ENCODE measurements at regions of chr16 and their contacts with region 1.

Region 1: DNA sequence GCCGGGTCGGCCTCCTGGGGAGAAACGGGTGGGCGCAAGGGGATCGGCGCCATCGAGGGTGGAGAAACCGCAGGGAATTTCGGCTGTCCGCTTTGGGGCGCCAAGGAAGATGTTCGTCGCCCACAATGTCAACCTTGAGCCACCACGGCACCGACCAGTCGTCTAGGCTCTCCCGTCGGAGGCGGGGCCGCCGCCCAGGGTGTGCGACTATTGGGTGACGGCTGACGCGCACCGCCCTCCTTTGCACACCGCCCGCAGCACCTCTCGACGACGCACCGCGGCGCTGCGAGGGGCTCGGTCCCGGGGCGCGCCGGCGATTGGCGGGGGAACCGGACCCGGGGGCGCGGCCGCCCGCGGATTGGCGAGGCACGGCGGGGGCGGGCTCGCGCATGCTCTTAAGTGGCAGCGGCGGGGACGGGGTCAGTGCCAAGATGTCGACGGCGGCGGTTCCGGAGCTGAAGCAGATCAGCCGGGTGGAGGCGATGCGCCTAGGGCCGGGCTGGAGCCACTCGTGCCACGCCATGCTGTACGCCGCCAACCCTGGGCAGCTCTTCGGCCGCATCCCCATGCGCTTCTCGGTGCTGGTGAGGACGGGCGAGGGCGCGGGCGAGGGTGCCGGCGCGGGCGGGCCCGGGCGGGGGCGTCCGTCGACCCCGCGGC is at the start of gene NUDT16L1:
- DNase-seq: peak; percentile 94 to 99 (median 97)
- ATAC-seq: peak; percentile 90
- H3K4me3 ChIP-seq: peak within 1 kb of the TSS; percentile 85 to 97
- H3K4me3 Mint-ChIP-seq: peak within 1 kb of the TSS; percentile 88
- H3K27ac ChIP-seq: peak within 1 kb of the TSS; percentile 68 to 93
- H3K27ac Mint-ChIP-seq: peak within 1 kb of the TSS; percentile 89
- H3K4me1 ChIP-seq: peaks cover 30% of the 10 kb centered on the region
- H3K4me1 Mint-ChIP-seq: peaks cover 13% of the 10 kb centered on the region
- H3K27me3 ChIP-seq: no peaks in the 10 kb centered on the region
- H3K27me3 Mint-ChIP-seq: no peaks in the 10 kb centered on the region
- CTCF ChIP-seq: no peak
- total RNA-seq, gene NUDT16L1: 72.9 to 76.5 TPM

Region 2: DNA sequence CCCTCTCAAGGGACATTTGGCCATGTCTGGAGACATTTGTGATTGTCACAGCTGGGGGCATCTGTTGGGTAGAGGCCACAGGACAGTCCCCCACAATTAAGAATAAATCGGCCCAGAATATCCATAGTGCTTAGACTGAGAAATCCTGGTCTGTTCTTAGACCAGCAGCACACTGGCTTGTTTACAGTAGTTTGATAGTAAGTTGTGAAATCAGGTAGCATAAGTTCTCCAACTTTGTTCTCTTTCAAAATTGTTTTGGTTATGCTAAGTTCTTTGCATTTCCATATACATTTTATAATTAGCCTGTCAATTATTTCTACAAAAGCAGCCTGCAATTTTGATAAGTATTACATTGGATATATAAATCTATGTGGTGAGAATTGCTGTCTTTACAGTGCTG is 62.0 kb before region 1 on chr16:
- CTCF ChIA-PET with region 1: no interaction called
- POLR2A ChIA-PET with region 1: no interaction called
- intact Hi-C with region 1: no loop called
- DNase-seq: no peak
- ATAC-seq: no peak
- H3K4me3 ChIP-seq: no peak overlapping the region
- H3K4me3 Mint-ChIP-seq: no peak overlapping the region
- H3K27ac ChIP-seq: no peak overlapping the region
- H3K27ac Mint-ChIP-seq: no peak overlapping the region
- H3K4me1 ChIP-seq: peaks cover 7% of the 10 kb centered on the region
- H3K4me1 Mint-ChIP-seq: peaks cover 21% of the 10 kb centered on the region
- H3K27me3 ChIP-seq: no peaks in the 10 kb centered on the region
- H3K27me3 Mint-ChIP-seq: no peaks in the 10 kb centered on the region
- CTCF ChIP-seq: no peak

Region 3: GRCh38 chr16:4660454-4661007 is 32.9 kb before region 1 on chr16:
- CTCF ChIA-PET with region 1: no interaction called
- POLR2A ChIA-PET with region 1: interaction called, 3 read pairs
- intact Hi-C with region 1: loop called in 1 of 2 experiments (anchors 2 kb)
- DNase-seq: peak in 8 of 9 experiments; percentile 27 to 90 (median 79)
- ATAC-seq: peak; percentile 47
- H3K4me3 ChIP-seq: peak overlapping the region in 1 of 2 experiments; percentile 44
- H3K4me3 Mint-ChIP-seq: peak overlapping the region; percentile 37
- H3K27ac ChIP-seq: peak overlapping the region; percentile 71 to 73
- H3K27ac Mint-ChIP-seq: peak overlapping the region; percentile 85
- H3K4me1 ChIP-seq: peaks cover 70% of the 10 kb centered on the region
- H3K4me1 Mint-ChIP-seq: peaks cover 63% of the 10 kb centered on the region
- H3K27me3 ChIP-seq: no peaks in the 10 kb centered on the region
- H3K27me3 Mint-ChIP-seq: no peaks in the 10 kb centered on the region
- CTCF ChIP-seq: no peak

Region 4: DNA sequence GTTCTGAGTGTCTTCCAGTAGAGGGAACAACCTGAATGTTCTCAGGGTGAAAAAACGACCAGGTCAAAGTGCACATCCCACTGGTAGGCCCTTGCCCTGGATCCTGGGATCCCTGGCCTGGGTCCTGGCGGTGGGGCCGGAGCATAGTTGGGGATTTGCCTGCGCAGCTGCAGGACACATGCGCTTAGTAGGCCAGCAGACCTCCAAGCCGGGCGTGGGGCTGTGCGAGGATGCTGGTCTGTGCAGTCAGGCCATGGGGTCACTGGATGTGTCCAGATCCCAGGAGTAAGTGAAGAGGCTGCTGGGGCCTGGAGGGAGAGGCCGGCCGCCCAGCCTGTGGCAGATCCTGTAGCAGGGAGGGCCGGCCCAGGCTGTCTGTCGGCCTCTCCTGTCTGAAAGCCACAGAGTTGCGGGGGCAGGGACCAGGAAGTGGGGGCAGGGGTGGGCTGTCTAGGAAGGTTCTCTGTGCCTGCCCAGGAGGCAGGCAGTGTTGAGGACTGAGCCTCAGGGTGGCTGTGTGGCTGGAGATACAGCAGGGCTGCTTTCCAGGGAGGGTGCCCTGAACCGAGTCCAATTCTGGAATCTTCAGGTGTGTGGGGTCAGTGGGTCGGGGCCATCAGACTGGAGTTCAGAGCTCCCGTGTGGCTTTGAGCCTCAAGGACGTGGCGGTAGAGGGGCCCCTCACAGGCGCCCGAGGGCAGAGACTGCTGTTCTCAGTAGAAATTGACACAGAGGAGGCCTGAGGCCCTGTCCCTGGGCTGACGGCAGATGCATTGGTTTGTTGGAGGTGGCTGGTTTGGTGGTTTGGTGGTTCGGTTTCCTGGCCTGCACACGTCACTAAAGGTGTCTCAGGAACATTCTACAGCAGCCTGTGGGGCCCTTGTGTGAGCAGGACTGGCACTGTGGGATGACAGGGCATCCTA is 17.3 kb before region 1 on chr16:
- CTCF ChIA-PET with region 1: interaction called, 4 read pairs
- POLR2A ChIA-PET with region 1: interaction called, 7 read pairs
- intact Hi-C with region 1: loop called (anchors 1 kb)
- DNase-seq: peak; percentile 44 to 90 (median 72)
- ATAC-seq: peak; percentile 89
- H3K4me3 ChIP-seq: peak overlapping the region; percentile 16 to 24
- H3K4me3 Mint-ChIP-seq: peak overlapping the region; percentile 69
- H3K27ac ChIP-seq: peak overlapping the region; percentile 65 to 86
- H3K27ac Mint-ChIP-seq: peak overlapping the region; percentile 96
- H3K4me1 ChIP-seq: peaks cover 31% of the 10 kb centered on the region
- H3K4me1 Mint-ChIP-seq: peaks cover 35% of the 10 kb centered on the region
- H3K27me3 ChIP-seq: no peaks in the 10 kb centered on the region
- H3K27me3 Mint-ChIP-seq: no peaks in the 10 kb centered on the region
- CTCF ChIP-seq: no peak

Region 5: DNA sequence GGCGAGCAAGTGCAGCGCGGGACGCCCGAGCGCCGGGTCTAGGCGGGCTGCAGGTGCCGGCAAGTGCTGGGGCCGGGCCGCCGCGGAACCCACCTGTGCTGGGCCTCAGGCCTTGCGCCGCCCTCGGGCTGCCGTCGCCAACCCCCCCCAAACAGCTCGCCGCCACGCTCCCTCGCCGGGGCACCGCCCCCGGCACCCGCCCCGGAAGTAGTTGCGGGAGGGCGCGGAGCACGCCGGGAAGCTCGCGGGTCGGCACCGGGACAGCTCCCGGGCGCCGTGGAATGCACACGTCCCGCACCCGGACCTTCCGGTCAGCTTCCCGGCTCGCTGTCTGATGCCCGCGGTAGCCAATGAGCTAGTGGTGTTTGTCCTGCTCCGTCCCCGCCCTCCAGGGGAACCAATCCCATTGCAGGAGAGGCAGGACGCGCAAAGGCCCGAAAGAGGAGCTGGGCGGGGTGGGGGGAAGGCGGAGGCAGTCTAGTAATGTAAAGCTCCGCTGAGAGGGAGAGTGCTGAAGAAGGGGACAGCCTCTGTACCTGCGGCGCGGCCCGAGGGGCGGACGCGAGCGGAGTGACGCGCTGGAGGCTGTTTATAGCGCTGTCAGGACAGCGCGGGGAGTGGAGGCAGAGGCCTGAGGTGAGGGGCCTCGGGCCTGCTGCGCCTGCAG is 40.8 kb after region 1 on chr16 and contains the starts of genes ANKS3 and DNAAF8:
- CTCF ChIA-PET with region 1: interaction called, 3 read pairs
- POLR2A ChIA-PET with region 1: interaction called, 15 read pairs
- intact Hi-C with region 1: loop called (anchors 1 kb)
- DNase-seq: peak; percentile 47 to 90 (median 79)
- ATAC-seq: peak; percentile 73
- H3K4me3 ChIP-seq: peak within 1 kb of the TSS; percentile 81 to 96
- H3K4me3 Mint-ChIP-seq: peak within 1 kb of the TSS; percentile 91
- H3K27ac ChIP-seq: peak within 1 kb of the TSS; percentile 69 to 75
- H3K27ac Mint-ChIP-seq: peak within 1 kb of the TSS; percentile 92
- H3K4me1 ChIP-seq: peaks cover 13% of the 10 kb centered on the region
- H3K4me1 Mint-ChIP-seq: peaks cover 17% of the 10 kb centered on the region
- H3K27me3 ChIP-seq: no peaks in the 10 kb centered on the region
- H3K27me3 Mint-ChIP-seq: no peaks in the 10 kb centered on the region
- CTCF ChIP-seq: no peak
- total RNA-seq, gene ANKS3: 8.6 to 11.8 TPM
- total RNA-seq, gene DNAAF8: not detected

Region 6: GRCh38 chr16:4766874-4767628 is 73.6 kb after region 1 on chr16 and contains the start of gene ZNF500:
- CTCF ChIA-PET with region 1: no interaction called
- POLR2A ChIA-PET with region 1: interaction called, 3 read pairs
- intact Hi-C with region 1: loop called in 1 of 2 experiments (anchors 1 kb)
- DNase-seq: peak; percentile 89 to 98 (median 96)
- ATAC-seq: peak; percentile 90
- H3K4me3 ChIP-seq: peak within 1 kb of the TSS; percentile 77 to 83
- H3K4me3 Mint-ChIP-seq: peak within 1 kb of the TSS; percentile 91
- H3K27ac ChIP-seq: peak within 1 kb of the TSS; percentile 67 to 77
- H3K27ac Mint-ChIP-seq: peak within 1 kb of the TSS; percentile 81
- H3K4me1 ChIP-seq: peaks cover 22% of the 10 kb centered on the region
- H3K4me1 Mint-ChIP-seq: peaks cover 45% of the 10 kb centered on the region
- H3K27me3 ChIP-seq: no peaks in the 10 kb centered on the region
- H3K27me3 Mint-ChIP-seq: no peaks in the 10 kb centered on the region
- CTCF ChIP-seq: no peak
- total RNA-seq, gene ZNF500: 12.1 to 15.9 TPM

Region 7: GRCh38 chr16:4802659-4803287 is 109.3 kb after region 1 on chr16:
- CTCF ChIA-PET with region 1: no interaction called
- POLR2A ChIA-PET with region 1: interaction called, 5 read pairs
- intact Hi-C with region 1: loop called (anchors 1 kb)
- DNase-seq: peak; percentile 79 to 95 (median 88)
- ATAC-seq: peak; percentile 86
- H3K4me3 ChIP-seq: peak overlapping the region; percentile 60 to 89
- H3K4me3 Mint-ChIP-seq: peak overlapping the region; percentile 87
- H3K27ac ChIP-seq: peak overlapping the region; percentile 25 to 77
- H3K27ac Mint-ChIP-seq: peak overlapping the region; percentile 74
- H3K4me1 ChIP-seq: peaks cover 14% of the 10 kb centered on the region
- H3K4me1 Mint-ChIP-seq: peaks cover 11% of the 10 kb centered on the region
- H3K27me3 ChIP-seq: no peaks in the 10 kb centered on the region
- H3K27me3 Mint-ChIP-seq: no peaks in the 10 kb centered on the region
- CTCF ChIP-seq: no peak

Measured in CD8-positive, alpha-beta T cell (primary cell).